ENCODE measurements at regions of chr9 and their contacts with region 1.

Region 1: DNA sequence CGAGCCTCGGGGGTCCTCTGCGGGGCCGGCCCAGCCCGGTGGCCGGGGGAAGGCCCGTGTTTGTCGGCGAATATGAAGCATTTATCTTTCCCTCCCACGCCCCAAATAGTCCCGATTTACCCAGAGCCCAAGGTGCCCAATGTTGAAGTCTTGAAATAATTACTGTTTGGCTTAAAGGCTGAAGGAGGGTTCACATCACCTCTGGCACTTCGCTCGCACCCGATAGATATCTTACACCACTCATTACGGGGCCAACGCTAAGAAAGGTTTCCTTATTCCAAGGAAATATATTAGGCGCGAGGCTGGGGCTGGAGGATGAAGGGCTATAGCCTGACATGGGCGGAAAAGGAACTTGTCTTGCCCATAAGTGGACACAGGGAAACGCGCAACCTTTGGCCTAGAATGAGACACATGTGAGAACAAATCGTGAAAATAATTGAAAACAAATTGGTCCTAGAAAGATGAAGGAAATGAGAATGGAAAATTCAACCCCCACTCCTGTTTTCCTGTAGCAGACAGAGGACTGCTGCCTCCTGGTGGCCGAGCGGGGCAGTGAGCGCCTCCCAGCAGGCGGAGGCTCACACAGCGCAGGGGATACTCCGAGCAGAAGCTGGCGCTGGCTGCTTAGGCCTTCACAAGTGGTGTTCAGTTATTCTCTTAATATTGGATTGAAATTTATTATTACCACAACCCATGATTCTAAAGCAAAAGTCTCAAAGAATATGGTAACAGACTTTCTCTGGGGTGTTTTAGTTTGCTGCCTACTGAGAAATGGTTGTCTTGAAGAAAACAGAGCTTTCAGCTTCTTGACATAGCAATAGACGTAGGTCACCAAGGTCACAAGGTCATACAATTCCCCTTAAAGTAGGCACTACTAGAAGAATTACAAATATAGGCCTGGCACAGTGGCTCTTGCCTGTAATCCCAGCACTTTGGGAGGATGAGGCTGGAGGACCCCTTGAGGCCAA is 7.9 kb downstream of the CCL21 start:
- DNase-seq: peak; percentile 78
- H3K4me3 Mint-ChIP-seq: peak overlapping the region; percentile 57
- H3K27ac Mint-ChIP-seq: no peak overlapping the region
- H3K4me1 Mint-ChIP-seq: peaks cover 11% of the 10 kb centered on the region
- H3K27me3 Mint-ChIP-seq: peaks cover 20% of the 10 kb centered on the region

Region 2: DNA sequence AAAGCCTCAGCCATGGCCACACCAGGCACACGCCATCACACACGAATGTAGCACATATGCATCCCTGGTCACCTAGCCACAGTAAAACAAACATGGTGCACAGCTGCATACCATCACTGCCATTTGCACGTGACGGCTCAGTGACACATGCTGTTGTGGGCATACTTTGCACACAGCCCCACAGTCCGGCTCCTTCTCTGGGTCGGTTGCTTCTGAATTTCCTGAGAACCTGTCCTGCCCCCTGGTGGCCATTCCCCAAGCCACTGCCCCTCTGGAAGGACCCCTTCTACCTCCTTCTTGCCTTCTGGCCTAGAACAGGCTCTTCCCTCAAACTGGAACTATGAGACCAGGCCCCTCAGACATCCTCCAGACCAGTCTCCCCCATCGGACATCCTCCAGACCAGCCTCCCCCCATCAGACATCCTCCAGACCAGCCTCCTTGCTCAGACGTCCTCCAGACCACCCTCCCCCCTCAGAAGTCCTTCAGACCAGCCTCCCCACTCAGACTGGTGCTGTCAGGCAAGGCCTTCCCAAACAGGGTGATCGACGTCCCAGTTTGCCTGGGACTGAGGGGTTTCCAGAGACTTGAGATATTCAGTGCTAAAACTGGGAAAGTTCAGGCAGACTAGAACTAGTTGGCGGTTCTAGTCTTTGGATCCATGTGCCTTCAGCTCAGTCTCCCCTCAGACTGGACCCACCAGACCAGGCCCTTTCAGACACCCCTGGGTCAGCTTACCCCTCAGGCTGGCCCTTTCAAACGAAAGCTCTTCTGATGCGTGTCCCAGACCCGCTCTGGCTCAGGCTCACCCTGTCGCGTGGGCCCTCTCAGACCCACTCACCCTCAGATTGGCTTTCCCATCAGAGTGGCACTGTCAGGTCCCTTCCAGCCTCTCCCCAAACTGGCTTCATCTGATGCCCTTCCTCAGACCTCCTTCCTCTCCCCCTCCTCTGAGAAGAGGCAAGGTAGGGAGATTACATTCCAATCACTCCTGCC is 154.9 kb before region 1 on chr9:
- CTCF ChIA-PET with region 1: no interaction called
- POLR2A ChIA-PET with region 1: no interaction called
- DNase-seq: peak; percentile 57
- H3K4me3 Mint-ChIP-seq: no peak overlapping the region
- H3K27ac Mint-ChIP-seq: no peak overlapping the region
- H3K4me1 Mint-ChIP-seq: no peaks in the 10 kb centered on the region
- H3K27me3 Mint-ChIP-seq: peaks cover 18% of the 10 kb centered on the region

Region 3: DNA sequence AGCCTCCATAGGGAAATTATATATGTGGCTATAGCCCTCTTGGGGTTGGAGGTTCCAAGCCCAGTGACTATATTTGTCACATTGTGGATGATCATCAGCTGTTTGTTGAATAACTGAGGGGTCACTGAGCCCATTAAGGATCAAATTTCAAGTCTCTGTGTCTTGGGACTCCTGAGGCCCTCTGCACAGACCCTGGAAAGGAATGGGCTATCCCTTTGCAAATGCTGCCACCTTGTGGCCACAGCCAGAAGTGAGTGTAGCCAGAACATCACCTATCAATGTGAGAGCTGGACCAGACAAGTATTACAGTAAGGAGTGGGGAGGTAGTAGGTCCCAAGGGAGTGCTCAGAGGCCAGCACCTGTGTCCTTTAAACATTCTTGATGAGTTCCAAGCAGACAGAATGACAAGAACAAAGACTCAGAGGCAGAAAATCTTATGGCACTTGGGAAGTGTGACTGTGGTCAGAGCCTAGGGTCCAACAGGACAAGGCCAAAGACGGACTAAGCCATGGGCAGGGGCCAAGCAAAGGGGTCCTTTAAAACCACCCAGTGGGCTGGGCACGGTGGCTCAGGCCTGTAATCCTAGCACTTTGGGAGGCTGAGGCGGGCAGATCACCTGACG is 98.3 kb before region 1 on chr9:
- CTCF ChIA-PET with region 1: no interaction called
- POLR2A ChIA-PET with region 1: no interaction called
- DNase-seq: peak; percentile 85
- H3K4me3 Mint-ChIP-seq: no peak overlapping the region
- H3K27ac Mint-ChIP-seq: no peak overlapping the region
- H3K4me1 Mint-ChIP-seq: no peaks in the 10 kb centered on the region
- H3K27me3 Mint-ChIP-seq: peaks cover 8% of the 10 kb centered on the region

Region 4: DNA sequence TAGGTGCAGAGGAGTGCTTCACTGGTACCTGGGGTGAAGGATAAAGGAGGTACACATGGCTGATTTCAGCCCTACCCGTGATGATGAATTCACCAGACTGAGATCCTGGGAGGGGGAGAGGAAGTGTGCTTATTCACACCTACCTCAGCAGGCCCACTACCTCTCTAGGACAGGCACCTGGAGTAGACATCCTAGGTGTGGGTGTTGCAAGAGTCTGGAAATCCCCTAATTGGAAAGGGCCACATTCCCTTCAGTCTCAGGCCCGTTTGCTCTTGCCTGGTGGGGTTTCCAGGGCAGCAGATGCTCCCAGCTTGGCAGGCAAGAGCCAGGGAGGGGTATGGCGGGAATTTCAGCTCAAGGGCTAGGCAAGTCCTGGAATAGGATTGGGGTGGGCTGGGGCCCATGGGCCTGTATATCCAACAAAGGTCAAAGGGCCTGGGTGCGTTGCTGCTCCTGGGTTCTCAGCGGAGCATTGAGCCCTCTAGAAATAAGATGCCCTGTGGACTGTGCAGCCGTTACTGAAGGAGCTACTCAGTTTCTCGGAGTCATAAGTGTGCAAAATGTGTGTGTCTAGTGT is 13.7 kb after region 1 on chr9:
- CTCF ChIA-PET with region 1: interaction called, 21 read pairs
- POLR2A ChIA-PET with region 1: interaction called, 3 read pairs
- DNase-seq: no peak
- H3K4me3 Mint-ChIP-seq: no peak overlapping the region
- H3K27ac Mint-ChIP-seq: no peak overlapping the region
- H3K4me1 Mint-ChIP-seq: no peaks in the 10 kb centered on the region
- H3K27me3 Mint-ChIP-seq: peaks cover 21% of the 10 kb centered on the region

Region 5: DNA sequence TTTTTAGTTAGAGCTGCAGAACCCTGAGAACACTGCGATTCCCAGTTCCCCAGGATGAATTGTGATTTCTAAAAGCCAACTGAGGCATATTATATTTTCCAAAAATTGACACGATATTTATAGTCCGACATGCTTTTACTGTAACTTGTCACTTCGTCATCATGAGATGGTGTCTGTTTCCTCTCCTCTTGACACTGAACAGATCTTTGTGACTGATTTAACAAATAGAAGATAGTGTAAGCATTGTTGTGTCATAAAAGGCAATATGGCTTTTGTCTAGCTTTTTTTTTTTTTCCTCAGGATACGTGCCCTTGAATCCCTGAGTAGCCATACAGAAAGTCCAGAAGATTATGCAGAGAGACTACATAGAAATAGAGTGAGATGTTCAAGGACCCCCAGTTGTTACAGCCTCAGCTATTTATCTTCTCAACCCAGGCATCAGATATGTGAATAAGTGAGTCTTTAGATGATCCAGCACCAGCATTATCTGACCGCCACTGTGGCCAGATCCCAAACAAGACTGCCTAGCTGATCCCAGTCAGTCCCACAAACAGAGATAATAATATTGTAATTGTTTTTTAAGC is 35.7 kb after region 1 on chr9:
- CTCF ChIA-PET with region 1: no interaction called
- POLR2A ChIA-PET with region 1: no interaction called
- DNase-seq: no peak
- H3K4me3 Mint-ChIP-seq: no peak overlapping the region
- H3K27ac Mint-ChIP-seq: no peak overlapping the region
- H3K4me1 Mint-ChIP-seq: peaks cover 4% of the 10 kb centered on the region
- H3K27me3 Mint-ChIP-seq: peaks cover 5% of the 10 kb centered on the region

Measured in activated CD4-positive, alpha-beta T cell treated with anti-CD3 and anti-CD28 coated beads, Interleukin-2, amount 10 ng/mL, durations not matched to agents 7 days and 5 days (primary cell).